ENCODE measurements at regions of chr14 and their contacts with region 1.

Region 1: DNA sequence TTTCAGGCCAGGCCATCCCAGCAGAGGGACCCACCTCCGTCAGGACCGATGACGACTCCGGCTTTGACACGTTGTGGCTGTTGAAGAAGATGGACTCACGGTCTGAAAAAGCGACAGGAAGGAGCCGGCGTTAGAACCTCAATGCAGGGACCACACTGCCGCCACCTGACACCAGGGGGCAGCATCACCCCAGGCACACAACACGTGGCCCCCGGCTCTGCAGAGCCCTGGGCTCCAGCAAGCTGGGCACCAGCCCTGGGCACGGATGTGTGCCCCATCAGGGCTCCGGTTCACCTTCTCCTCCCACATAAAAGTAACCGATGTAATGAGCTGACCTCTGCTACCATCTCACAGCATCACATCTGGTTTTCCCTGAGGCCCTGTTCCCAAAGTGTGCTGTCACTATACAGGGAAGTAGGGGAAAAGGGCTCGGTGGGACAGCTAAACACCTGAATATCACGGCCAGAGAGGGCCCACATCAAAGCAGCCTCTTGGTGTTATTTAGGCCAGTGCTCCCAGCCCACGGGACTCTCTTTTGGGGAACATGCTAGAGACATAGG is 29.0 kb downstream of the CHGA start:
- DNase-seq: peak; percentile 76 to 91 (median 88)
- ATAC-seq: peak; percentile 93
- H3K4me3 ChIP-seq: no peak overlapping the region
- H3K4me1 ChIP-seq: no peaks in the 10 kb centered on the region
- CTCF ChIP-seq: peak; percentile 94

Region 2: DNA sequence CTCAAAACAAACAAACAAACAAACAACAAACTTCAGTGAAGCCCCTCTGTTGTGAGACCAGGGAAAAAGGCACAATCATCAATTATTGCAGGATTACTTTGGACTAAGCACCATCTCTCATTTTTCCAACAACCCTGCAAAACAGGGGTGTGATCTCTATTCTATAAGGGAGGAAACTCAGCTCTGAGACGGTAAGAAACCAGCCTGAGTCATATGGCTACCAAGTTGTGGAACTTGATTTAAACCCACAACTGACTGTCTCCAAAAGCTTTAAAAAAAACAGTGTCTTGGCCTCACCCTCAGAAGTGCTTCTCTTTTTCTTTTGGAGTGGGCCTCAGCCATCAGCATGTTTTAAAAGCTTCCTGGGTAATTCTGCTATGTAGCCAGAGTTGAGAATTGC is 388.6 kb before region 1 on chr14:
- intact Hi-C with region 1: no loop called
- DNase-seq: no peak
- ATAC-seq: peak; percentile 45
- H3K4me3 ChIP-seq: no peak overlapping the region
- H3K4me1 ChIP-seq: no peaks in the 10 kb centered on the region
- CTCF ChIP-seq: no peak

Region 3: GRCh38 chr14:93146119-93146518 is 194.1 kb after region 1 on chr14:
- intact Hi-C with region 1: loop called in 1 of 2 experiments (anchors 10 kb)
- DNase-seq: peak in 1 of 3 donors; percentile 1
- ATAC-seq: no peak
- H3K4me3 ChIP-seq: no peak overlapping the region
- H3K4me1 ChIP-seq: peaks cover 13% of the 10 kb centered on the region
- CTCF ChIP-seq: no peak

Measured in mucosa of descending colon (tissue), 3 donors.